ENCODE measurements at regions of chr1 and their contacts with region 1.

Region 1: DNA sequence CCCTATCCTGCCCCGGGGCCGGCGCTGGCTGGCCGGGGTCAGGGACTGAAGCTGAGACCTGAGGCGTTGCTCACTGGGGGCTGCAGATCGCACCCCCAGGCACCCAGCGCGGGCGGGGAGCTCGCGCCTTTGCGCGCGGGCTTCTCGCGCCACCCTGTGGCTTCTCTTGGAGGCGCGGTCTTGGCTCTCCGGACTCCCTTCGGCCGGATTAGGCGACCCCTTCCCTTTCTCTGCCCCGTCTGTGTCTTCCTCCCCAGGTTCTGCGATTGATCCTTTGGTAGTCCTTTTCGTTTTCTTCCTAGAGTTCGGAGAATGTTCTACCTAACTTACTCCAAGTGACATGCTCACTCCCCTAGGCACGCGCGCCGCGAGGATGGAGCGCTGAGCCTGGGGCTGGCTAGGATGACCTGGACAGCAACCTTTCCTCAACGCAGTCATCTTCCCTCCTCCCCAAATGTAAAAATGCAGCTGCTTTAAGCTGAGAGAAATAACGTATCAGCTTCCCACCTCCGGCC is 495 bp upstream of the NTRK1 start:
- DNase-seq: peak in 1 of 2 experiments; percentile 49
- H3K4me3 ChIP-seq: peak overlapping the region; percentile 40; the same call in 1 of the 2 replicates
- H3K27ac ChIP-seq: no peak overlapping the region
- H3K4me1 ChIP-seq: peaks cover 12% of the 10 kb centered on the region
- H3K27me3 ChIP-seq: peaks cover 58% of the 10 kb centered on the region
- CTCF ChIP-seq: peak; percentile 80

Region 2: DNA sequence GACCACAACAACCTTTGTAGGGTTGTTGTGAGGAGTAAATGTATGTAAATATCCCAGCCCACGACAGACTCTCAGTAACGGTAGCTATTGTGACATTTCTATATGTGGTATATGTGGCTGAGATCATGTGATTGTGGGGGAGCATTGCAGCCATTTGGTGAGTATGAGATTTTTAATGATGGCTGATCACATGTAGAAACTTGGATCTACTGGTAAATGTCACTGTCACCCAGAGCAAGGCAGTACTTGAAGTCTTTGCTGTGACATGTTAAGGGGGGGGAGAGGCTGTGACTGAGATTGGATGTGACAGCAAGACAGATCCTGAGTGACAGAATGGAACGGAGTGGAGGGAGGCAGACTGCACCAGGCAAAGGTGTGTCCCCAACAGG is 335.7 kb before region 1 on chr1:
- CTCF ChIA-PET with region 1: no interaction called
- POLR2A ChIA-PET with region 1: no interaction called
- intact Hi-C with region 1: no loop called
- DNase-seq: no peak
- H3K4me3 ChIP-seq: no peak overlapping the region
- H3K27ac ChIP-seq: no peak overlapping the region
- H3K4me1 ChIP-seq: no peaks in the 10 kb centered on the region
- H3K27me3 ChIP-seq: no peaks in the 10 kb centered on the region
- CTCF ChIP-seq: no peak

Region 3: GRCh38 chr1:156625436-156626078 is 234.6 kb before region 1 on chr1:
- CTCF ChIA-PET with region 1: interaction called, 6 read pairs
- POLR2A ChIA-PET with region 1: no interaction called
- intact Hi-C with region 1: loop called (anchors 2 kb)
- DNase-seq: peak in 1 of 2 experiments; percentile 32
- H3K4me3 ChIP-seq: no peak overlapping the region
- H3K27ac ChIP-seq: no peak overlapping the region
- H3K4me1 ChIP-seq: peaks cover 26% of the 10 kb centered on the region
- H3K27me3 ChIP-seq: peaks cover 13% of the 10 kb centered on the region; the same call in 1 of the 2 replicates
- CTCF ChIP-seq: peak; percentile 92

Region 4: GRCh38 chr1:156740679-156741612 is 119.2 kb before region 1 on chr1 and contains the start of gene MRPL24:
- CTCF ChIA-PET with region 1: interaction called, 11 read pairs
- POLR2A ChIA-PET with region 1: no interaction called
- intact Hi-C with region 1: no loop called
- DNase-seq: peak; percentile 97 to 99
- H3K4me3 ChIP-seq: peak within 1 kb of the TSS; percentile 79
- H3K27ac ChIP-seq: peak within 1 kb of the TSS; percentile 60
- H3K4me1 ChIP-seq: peaks cover 17% of the 10 kb centered on the region
- H3K27me3 ChIP-seq: no peaks in the 10 kb centered on the region
- CTCF ChIP-seq: no peak
- total RNA-seq, gene MRPL24: 74.1 and 85.3 TPM in 2 replicates

Region 5: DNA sequence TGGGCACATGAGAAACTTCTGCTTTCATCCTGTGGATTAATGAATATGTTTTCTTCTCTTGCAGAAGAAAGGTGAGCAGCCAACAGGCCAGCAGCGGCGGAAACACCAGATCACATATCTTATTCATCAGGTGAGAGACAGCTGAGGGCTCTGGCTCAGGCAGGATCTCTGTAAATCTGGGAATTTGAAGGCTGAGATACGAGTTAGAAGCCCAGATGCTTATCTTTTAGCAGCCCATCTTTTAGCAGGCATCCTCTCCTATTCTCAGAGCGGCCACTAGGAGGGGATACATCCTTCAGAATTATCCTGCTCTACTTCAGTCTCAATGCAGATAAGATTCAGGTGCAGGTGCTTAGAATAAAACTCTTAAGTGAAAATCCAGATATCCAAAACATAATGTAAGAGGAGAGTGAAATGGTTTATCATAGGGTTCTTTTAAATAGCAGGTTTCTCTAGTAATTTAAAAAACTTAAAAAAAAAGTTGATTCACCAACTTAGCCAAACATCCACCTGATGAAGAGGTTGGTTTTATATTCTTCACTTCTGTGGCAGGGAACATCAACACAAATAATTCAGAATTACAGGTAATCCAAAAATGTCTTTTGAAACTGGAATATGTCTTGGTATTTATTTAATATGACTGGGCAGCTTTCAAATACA is 62.8 kb before region 1 on chr1:
- CTCF ChIA-PET with region 1: interaction called, 8 read pairs
- POLR2A ChIA-PET with region 1: no interaction called
- intact Hi-C with region 1: loop called (anchors 2 kb)
- DNase-seq: peak; percentile 41 to 54
- H3K4me3 ChIP-seq: no peak overlapping the region
- H3K27ac ChIP-seq: no peak overlapping the region
- H3K4me1 ChIP-seq: no peaks in the 10 kb centered on the region
- H3K27me3 ChIP-seq: no peaks in the 10 kb centered on the region
- CTCF ChIP-seq: peak; percentile 90